Activated naive CD4-positive, alpha-beta T cell treated with anti-CD3 and anti-CD28 coated beads for 36 hours (primary cell): ENCODE measurements at regions of chr14 and their contacts with region 1.

Region 1: GRCh38 chr14:74867673-74868072 is 8.3 kb downstream of the PROX2 start:
- DNase-seq: peak; percentile 64
- H3K4me3 Mint-ChIP-seq: peak overlapping the region; percentile 7
- H3K27ac Mint-ChIP-seq: no peak overlapping the region
- H3K4me1 Mint-ChIP-seq: peaks cover 16% of the 10 kb centered on the region
- H3K27me3 Mint-ChIP-seq: no peaks in the 10 kb centered on the region

Region 2: DNA sequence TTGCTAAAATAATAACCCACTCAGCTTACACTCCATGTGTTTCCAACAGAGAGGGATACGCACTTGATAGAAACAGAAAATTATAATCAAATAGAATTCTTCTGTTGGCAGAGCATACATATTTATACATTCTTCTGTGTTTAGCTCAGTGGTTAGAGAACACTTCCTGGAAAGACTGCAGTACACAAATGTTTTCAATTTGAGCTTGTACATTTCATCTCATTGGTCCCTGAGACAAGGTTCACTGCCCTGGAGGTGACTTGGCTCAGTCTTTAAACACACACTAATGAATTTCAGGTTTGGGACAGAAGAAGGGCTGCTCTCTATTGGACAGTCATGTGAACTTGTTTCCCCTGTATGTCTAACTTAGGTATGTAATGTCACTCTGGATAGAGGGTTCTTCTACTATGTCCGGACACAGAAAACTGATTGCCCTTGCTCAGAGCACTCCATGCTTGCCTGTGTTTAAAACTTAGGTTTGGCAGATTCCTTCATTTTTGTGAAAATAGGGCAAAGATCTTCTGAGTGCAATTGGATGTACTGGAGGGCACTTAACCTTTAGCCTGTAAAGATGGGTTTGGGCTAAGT is 14.7 kb before region 1 on chr14:
- CTCF ChIA-PET with region 1: interaction called, 44 read pairs
- intact Hi-C with region 1: no loop called
- DNase-seq: no peak
- H3K4me3 Mint-ChIP-seq: no peak overlapping the region
- H3K27ac Mint-ChIP-seq: no peak overlapping the region
- H3K4me1 Mint-ChIP-seq: peaks cover 17% of the 10 kb centered on the region
- H3K27me3 Mint-ChIP-seq: no peaks in the 10 kb centered on the region